Motor neuron (in vitro differentiated cells): ENCODE measurements at regions of chr22 and their contacts with region 1.

Region 1: GRCh38 chr22:39532215-39533071 is at the start of gene RPS19BP1:
- ATAC-seq: peak; percentile 77 to 88 (median 84)
- H3K4me3 ChIP-seq: peak within 1 kb of the TSS; percentile 58 to 80 (median 71)
- H3K27ac ChIP-seq: peak within 1 kb of the TSS; percentile 82 to 92
- H3K4me1 ChIP-seq: peaks cover 21 to 22% of the 10 kb centered on the region in 2 donors
- total RNA-seq, gene RPS19BP1: 69.1 to 114 (median 89.9) TPM

Region 2: DNA sequence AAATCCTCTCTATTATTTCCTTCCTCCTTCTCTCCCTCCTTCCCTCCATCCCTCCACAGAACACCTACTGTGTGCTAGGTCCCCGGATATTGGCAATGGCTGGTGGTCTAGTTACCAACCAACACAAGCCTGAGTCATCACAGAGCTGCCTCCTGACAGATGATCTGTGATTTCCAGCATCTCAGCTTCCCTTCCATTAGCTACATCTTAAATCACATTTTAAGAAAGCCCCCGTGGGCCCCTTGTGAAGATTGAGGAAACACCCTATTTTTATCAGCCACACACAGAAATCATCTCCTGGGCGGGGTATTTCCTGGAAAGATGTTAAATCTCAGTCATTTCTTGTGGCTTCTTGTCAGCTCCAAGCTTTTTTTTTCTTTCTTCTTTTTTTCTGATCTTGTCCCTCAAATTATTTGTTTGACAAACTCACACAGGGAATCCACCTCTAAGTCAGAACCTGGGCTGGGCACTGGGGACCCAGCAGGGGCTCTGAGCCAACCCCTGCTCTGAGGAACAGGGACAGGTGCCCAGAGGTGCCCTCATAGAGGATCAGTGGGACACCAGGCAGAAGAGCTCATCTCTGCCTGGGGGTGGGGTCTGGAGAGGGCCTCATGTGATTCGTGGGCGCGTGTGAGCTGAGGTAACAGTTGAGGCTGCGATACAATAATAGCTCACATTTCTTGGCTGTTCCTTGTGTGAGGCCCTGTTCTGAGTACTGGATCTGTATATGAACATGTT is 80.5 kb after region 1 on chr22:
- in situ Hi-C with region 1: no loop called
- ATAC-seq: peak in 5 of 8 experiments; percentile 28 to 64 (median 36)
- H3K4me3 ChIP-seq: no peak overlapping the region
- H3K27ac ChIP-seq: no peak overlapping the region
- H3K4me1 ChIP-seq: peaks cover 6 to 7% of the 10 kb centered on the region in 2 donors

Region 3: DNA sequence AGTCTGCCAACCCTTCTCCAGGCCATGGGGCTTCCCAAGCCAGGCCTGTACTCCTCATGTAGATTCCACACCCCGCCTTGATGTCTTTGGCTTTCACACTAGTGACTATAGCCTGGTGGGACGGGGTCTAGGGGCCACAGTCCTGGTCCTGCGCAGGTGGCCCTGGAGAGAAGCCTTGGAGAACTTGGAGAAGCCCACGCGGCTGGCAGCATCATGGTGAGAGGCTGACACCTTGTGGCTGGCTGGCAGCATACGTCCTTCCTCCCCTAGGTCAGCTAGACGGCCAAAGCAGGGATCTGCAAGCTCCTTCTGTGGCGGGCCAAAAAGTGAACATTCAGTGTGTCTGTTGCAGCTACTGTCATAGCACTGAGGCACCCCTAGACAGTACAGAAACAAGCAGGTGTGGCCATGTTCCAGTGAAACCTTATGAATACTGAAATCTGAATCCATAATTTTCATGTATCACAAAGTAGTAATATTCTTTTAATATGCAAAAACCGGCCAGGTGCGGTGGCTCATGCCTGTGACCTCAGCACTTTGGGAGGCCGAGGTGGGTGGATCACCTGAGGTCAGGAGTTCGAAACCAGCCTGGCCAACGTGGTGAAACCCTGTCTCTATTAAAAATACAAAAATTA is 504.3 kb after region 1 on chr22:
- in situ Hi-C with region 1: loop called in 7 of 9 experiments (anchors 10 to 25 kb)
- ATAC-seq: peak; percentile 72 to 90 (median 80)
- H3K4me3 ChIP-seq: no peak overlapping the region
- H3K27ac ChIP-seq: no peak overlapping the region
- H3K4me1 ChIP-seq: peaks cover 0 to 7% of the 10 kb centered on the region in 2 donors

Region 4: GRCh38 chr22:40044102-40044869 is 511.8 kb after region 1 on chr22:
- in situ Hi-C with region 1: loop called in 7 of 9 experiments (anchors 10 to 25 kb)
- ATAC-seq: peak; percentile 81 to 91 (median 88)
- H3K4me3 ChIP-seq: peak overlapping the region; percentile 64 to 85 (median 78)
- H3K27ac ChIP-seq: peak overlapping the region; percentile 92 to 97
- H3K4me1 ChIP-seq: peaks cover 7 to 9% of the 10 kb centered on the region in 2 donors

Region 5: GRCh38 chr22:40363059-40363458 is 830.6 kb after region 1 on chr22:
- in situ Hi-C with region 1: loop called in 2 of 9 experiments (anchors 25 kb)
- ATAC-seq: peak in 2 of 8 experiments; percentile 46 to 55
- H3K4me3 ChIP-seq: no peak overlapping the region
- H3K27ac ChIP-seq: no peak overlapping the region
- H3K4me1 ChIP-seq: no peaks in the 10 kb centered on the region